Activated T-helper 1 cell treated with anti-CD3 and anti-CD28 coated beads, Interleukin-12 subunit alpha, Interleukin-12 subunit beta, Interleukin-2, Interleukin-4 antibody, amounts not matched to agents 30 ng/mL and 10 ng/mL and 1 ng/mL, durations not matched to agents 14 hours and 24 hours and 36 hours (primary cell): ENCODE measurements at regions of chr10 and their contacts with region 1.

Region 1: DNA sequence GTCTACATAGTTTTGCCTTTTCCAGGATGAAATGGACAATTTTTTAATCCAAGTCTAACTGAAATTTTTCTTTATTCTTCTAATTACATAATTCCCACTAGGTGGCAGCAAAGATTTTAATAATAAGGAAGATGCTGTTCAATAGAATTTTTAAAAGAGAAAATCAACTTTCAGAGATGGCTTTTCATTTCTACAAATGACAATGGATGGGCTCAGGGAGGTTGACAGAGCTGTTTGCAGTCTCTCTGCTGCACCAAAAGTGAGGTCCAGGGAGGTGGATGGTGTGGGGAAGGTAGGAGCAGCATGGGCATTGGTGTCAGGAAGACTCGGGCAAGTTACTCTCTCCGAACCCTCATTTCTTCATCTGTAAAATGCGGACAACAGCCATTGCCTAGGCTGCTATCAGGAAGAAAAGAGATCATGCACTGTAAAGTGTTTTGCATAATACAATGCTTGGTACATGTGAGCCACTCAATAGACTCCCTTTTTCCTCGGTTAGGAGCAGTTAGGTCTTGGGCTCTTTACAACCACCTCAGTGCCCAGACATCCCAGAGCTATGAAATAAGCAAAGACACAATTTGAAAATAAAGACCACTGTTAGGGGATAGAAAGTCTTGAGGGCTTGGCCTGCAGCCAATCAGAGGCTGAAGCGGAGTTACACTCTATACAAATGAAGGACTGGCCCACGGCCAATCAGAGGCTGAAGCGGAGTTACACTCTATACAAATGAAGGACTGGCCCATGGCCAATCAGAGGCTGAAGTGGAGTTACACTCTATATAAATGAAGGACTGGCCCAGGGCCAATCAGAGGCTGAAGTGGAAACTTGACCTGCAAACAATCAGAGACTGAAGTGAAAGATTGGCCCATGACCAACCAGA is 107.1 kb downstream of the ABLIM1 start:
- DNase-seq: no peak
- H3K4me3 Mint-ChIP-seq: no peak overlapping the region
- H3K27ac Mint-ChIP-seq: no peak overlapping the region
- H3K4me1 Mint-ChIP-seq: peaks cover 21% of the 10 kb centered on the region
- H3K27me3 Mint-ChIP-seq: no peaks in the 10 kb centered on the region

Region 2: DNA sequence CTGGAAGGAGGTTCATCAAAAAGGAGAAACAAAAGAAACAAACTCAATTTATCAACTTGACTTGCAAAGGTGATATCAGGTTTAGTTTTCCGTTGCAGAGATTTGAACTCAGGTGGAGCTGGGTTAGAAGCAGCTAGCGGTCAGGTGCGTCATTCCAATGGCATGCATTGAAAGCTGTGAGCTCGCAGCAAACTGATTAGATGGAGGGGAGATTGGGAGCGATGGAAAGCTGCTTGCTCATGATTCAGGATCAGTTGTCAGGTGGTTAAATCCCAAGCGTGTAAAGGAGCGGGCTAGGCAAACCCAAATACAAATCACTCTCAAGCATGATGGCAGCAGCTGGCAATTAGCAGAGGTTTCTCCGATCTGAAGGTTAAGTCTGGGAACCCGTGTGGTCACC is 97.4 kb before region 1 on chr10:
- intact Hi-C with region 1: no loop called
- DNase-seq: no peak
- H3K4me3 Mint-ChIP-seq: no peak overlapping the region
- H3K27ac Mint-ChIP-seq: no peak overlapping the region
- H3K4me1 Mint-ChIP-seq: no peaks in the 10 kb centered on the region
- H3K27me3 Mint-ChIP-seq: no peaks in the 10 kb centered on the region

Region 3: GRCh38 chr10:114694752-114695151 is 143.8 kb after region 1 on chr10:
- intact Hi-C with region 1: loop called (anchors 2 kb)
- DNase-seq: no peak
- H3K4me3 Mint-ChIP-seq: no peak overlapping the region
- H3K27ac Mint-ChIP-seq: no peak overlapping the region
- H3K4me1 Mint-ChIP-seq: peaks cover 7% of the 10 kb centered on the region
- H3K27me3 Mint-ChIP-seq: peaks cover 28% of the 10 kb centered on the region

Region 4: GRCh38 chr10:114703377-114704107 is 152.5 kb after region 1 on chr10:
- intact Hi-C with region 1: loop called (anchors 1 kb)
- DNase-seq: no peak
- H3K4me3 Mint-ChIP-seq: no peak overlapping the region
- H3K27ac Mint-ChIP-seq: no peak overlapping the region
- H3K4me1 Mint-ChIP-seq: no peaks in the 10 kb centered on the region
- H3K27me3 Mint-ChIP-seq: peaks cover 28% of the 10 kb centered on the region

Region 5: DNA sequence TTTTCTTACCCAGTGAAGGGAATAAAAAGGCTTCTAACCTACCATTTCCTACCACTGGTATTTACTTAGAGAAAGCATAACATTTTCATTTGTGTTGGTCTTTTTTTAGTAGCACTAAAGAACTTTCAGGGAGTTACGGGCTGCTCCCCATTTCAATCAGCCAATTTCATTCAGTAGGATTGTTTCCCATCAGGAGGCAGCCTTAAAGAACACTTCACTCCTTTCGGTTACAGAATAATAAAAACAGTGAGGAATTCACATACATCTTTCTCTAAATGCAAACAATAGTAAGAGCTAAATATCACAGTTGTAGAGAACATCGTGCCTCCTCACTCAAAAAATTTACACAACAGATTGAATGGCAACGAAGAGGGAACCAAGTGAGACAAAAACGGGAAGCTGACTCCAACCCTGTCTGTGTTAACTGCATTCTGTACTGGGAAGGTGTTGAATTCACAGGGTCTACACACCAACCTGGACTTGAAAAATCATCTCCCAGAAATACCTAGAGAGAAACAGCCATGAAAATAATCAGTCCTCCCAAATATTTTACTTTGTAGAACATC is 162.6 kb after region 1 on chr10:
- intact Hi-C with region 1: no loop called
- DNase-seq: no peak
- H3K4me3 Mint-ChIP-seq: no peak overlapping the region
- H3K27ac Mint-ChIP-seq: no peak overlapping the region
- H3K4me1 Mint-ChIP-seq: no peaks in the 10 kb centered on the region
- H3K27me3 Mint-ChIP-seq: peaks cover 27% of the 10 kb centered on the region

Region 6: DNA sequence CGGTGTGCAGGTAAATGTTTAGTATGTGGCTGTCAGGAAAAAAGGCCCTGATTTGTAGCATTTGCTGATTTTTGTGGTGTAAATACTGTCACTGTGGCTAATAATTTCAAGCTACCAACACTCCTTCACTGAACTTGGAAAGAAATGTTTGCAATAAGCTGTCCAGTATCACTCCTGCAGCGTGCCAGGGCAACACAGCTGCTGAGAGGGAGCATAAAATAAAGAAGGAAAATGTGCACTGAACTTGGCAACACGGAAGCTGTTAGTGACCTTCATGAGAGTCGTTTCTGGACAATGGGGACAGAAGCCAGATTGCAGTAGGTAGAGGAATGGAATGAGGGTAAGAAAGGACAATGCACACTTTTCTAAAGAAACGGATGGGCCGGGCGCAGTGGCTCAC is 232.7 kb after region 1 on chr10:
- intact Hi-C with region 1: loop called (anchors 1 kb)
- DNase-seq: no peak
- H3K4me3 Mint-ChIP-seq: no peak overlapping the region
- H3K27ac Mint-ChIP-seq: no peak overlapping the region
- H3K4me1 Mint-ChIP-seq: peaks cover 14% of the 10 kb centered on the region
- H3K27me3 Mint-ChIP-seq: no peaks in the 10 kb centered on the region

Region 7: DNA sequence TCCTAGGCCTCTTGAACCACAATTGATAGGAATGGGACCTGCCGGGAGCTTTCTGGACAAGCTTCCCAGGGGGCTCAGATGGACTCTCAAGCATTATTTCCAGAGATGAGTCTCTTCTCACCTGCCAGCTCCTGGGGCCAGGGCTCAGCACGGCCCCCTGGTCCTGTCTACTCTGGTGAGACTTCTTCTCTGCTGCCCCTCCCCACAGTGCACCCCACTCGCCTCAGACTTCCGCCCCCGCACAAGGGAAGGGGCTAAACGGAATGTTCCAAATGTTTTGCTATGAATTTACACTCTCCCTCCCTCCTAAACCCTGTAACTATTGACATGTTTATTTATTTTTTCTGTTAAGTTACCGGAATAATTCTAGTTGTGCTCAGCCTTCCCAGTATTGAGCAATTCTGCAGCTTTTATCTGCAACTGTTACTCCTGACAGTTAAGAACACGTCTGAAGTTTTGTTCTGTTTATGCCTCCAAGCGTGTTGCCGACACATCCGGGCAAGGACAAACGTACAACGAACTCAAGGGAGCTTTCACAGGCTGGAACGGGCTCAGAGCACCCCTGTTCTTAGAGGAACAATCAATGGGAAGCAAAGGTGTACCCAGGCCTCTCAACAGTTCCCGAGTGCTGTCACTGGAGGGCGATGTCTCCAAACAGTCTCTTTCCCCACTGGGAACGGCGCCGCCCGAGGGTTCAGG is 325.8 kb after region 1 on chr10:
- intact Hi-C with region 1: loop called (anchors 1 kb)
- DNase-seq: peak; percentile 15
- H3K4me3 Mint-ChIP-seq: no peak overlapping the region
- H3K27ac Mint-ChIP-seq: no peak overlapping the region
- H3K4me1 Mint-ChIP-seq: peaks cover 32% of the 10 kb centered on the region
- H3K27me3 Mint-ChIP-seq: peaks cover 21% of the 10 kb centered on the region

Region 8: GRCh38 chr10:115129752-115130151 is 578.8 kb after region 1 on chr10:
- intact Hi-C with region 1: loop called (anchors 2 kb)
- DNase-seq: no peak
- H3K4me3 Mint-ChIP-seq: no peak overlapping the region
- H3K27ac Mint-ChIP-seq: no peak overlapping the region
- H3K4me1 Mint-ChIP-seq: no peaks in the 10 kb centered on the region
- H3K27me3 Mint-ChIP-seq: peaks cover 3% of the 10 kb centered on the region

Region 9: GRCh38 chr10:115409347-115409746 is 858.4 kb after region 1 on chr10:
- intact Hi-C with region 1: no loop called
- DNase-seq: no peak
- H3K4me3 Mint-ChIP-seq: no peak overlapping the region
- H3K27ac Mint-ChIP-seq: no peak overlapping the region
- H3K4me1 Mint-ChIP-seq: no peaks in the 10 kb centered on the region
- H3K27me3 Mint-ChIP-seq: no peaks in the 10 kb centered on the region